H1 (cell line): ENCODE measurements at regions of chr6 and their contacts with region 1.

Region 1: DNA sequence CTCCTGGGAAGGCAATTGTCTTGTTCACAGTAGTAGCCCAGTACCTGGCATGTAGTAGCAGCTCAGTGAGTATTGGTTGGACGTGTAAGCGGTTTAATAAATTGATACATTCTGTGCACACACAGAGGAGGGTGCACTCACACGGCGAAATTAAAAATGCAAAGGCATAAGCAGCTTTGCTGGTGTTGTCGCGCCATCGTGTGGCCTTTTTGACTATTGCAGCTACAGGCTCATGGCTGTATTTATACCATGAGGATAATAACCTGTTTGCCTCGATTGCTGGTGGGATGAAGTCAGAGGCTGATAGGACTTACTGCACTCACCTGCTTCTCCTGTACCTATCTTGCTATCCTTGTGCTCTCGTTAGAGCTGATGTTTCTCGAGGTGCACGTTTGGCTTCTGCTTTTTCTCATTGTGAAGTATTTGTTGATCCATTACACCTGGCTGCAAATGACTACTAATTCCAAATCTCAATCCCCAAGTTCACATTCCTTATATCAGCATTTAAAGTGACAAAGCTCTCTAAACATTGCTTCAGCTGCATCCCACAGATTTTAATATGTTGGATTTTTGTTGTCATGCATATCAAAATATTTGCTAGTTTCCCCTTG is 61.5 kb downstream of the TBXT start:
- DNase-seq: peak in 1 of 2 experiments; percentile 92
- H3K4me3 ChIP-seq: no peak overlapping the region
- H3K27ac ChIP-seq: no peak overlapping the region
- H3K4me1 ChIP-seq: no peaks in the 10 kb centered on the region
- H3K27me3 ChIP-seq: no peaks in the 10 kb centered on the region; a peak in 1 of 7 replicates
- CTCF ChIP-seq: peak; percentile 70 to 96 (median 92)
- EP300 ChIP-seq: no peak
- POLR2A ChIP-seq: no peak
- RAD21 ChIP-seq: peak; percentile 99 to 100

Region 2: DNA sequence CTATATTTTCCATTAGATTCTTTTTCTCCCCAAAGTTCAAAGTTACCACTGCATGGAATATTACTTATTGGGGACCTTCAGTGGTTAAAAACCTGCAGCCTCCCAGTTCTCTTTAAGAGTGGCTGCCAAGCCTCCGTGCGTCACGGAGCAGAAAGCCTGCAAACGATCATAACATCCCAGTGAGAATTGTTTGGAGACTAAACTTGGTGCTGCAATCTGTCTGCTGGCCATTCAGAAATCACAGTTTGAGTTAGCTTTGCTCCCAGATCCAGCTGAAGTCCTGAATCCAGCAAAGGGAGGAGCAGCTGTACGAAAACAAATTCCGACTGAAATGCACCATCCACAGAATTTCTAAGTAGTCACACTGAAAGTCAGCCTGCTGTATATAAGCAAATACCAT is 229.6 kb before region 1 on chr6:
- CTCF ChIA-PET with region 1: interaction called, 74 read pairs
- POLR2A ChIA-PET with region 1: no interaction called
- DNase-seq: no peak
- H3K4me3 ChIP-seq: no peak overlapping the region
- H3K27ac ChIP-seq: no peak overlapping the region
- H3K4me1 ChIP-seq: no peaks in the 10 kb centered on the region
- H3K27me3 ChIP-seq: no peaks in the 10 kb centered on the region; a peak in 1 of 7 replicates
- CTCF ChIP-seq: no peak
- EP300 ChIP-seq: no peak
- POLR2A ChIP-seq: no peak
- RAD21 ChIP-seq: no peak

Region 3: GRCh38 chr6:165884813-165885765 is 221.1 kb before region 1 on chr6:
- CTCF ChIA-PET with region 1: interaction called, 111 read pairs
- POLR2A ChIA-PET with region 1: no interaction called
- DNase-seq: peak; percentile 47 to 94
- H3K4me3 ChIP-seq: no peak overlapping the region
- H3K27ac ChIP-seq: no peak overlapping the region
- H3K4me1 ChIP-seq: no peaks in the 10 kb centered on the region
- H3K27me3 ChIP-seq: peaks cover 0 to 2% (median 0%) of the 10 kb centered on the region in 4 experiments; a peak in 1 of 7 replicates
- CTCF ChIP-seq: peak; percentile 87 to 97 (median 87)
- EP300 ChIP-seq: no peak
- POLR2A ChIP-seq: no peak
- RAD21 ChIP-seq: peak; percentile 95 to 96

Region 4: DNA sequence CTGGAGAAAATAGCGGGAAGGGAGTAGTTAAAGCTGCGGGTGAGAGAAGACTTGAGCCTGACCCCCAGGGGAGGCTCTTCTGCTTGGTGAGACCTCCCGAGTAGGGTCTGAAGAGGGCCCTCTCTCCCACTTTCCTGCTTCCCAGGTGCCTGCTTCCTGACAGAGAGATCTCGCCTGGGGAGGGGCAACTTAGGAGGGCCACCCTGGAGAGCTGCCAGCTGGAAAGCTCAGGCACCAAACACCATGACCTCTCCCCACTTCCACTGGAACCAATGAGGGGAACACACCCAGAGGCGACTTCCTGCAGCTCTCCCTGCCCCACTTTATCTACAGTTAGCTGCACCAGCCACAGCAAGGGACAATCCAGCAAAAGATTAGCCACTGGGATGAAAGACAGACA is 146.6 kb before region 1 on chr6:
- CTCF ChIA-PET with region 1: interaction called, 10 read pairs
- POLR2A ChIA-PET with region 1: no interaction called
- DNase-seq: no peak
- H3K4me3 ChIP-seq: no peak overlapping the region
- H3K27ac ChIP-seq: no peak overlapping the region
- H3K4me1 ChIP-seq: no peaks in the 10 kb centered on the region
- H3K27me3 ChIP-seq: no peaks in the 10 kb centered on the region; a peak in 2 of 7 replicates
- CTCF ChIP-seq: no peak
- EP300 ChIP-seq: no peak
- POLR2A ChIP-seq: no peak
- RAD21 ChIP-seq: no peak

Region 5: DNA sequence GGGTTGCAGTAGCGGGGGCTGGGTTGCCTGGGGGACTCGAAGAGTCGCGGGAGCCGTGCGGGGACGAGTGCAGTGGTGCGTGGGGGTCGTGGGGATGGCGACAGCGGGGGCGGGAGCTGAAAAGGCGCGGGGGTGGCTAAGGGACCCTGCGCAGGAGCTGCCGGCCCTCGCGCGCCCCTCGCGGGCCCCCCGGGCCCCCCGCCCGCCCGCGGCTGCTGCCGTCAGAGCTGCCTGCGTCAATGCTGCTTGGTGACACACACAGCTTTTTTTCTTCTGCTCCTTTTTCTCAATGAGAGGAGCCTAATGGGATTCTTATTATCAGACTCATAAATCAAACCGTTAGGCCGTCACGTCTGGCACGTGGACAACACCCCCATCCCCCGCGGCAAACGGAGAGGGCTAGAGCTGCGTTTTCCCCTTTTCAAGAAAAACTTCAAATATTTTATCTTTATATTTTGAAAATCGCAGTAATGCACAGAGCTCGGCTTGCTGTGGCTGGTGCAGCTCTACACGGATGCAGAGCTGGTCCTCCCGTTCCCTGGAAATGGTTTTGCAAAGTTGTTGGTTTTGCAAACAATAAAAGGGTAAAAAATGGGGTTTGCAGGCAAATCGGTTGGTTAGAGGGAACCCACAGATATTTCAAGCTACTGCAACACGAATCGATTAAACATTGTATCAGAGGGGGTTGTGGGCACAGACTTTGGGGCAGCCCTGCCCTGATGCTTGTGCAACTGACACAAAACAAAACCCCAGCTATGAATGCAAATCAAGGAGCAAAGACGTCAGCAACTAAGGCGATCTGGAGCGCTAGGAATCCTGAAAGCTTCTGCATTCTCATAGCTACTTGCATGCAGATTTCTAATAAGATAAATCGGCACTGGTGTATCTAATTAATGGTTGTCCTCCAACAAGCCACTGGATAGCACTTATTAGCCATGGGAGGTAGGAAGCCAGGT is 100.0 kb before region 1 on chr6:
- CTCF ChIA-PET with region 1: interaction called, 11 read pairs
- POLR2A ChIA-PET with region 1: no interaction called
- DNase-seq: peak in 1 of 2 experiments; percentile 43
- H3K4me3 ChIP-seq: peak overlapping the region; percentile 14 to 55 (median 27); a peak in 7 of 8 replicates
- H3K27ac ChIP-seq: no peak overlapping the region
- H3K4me1 ChIP-seq: peaks cover 3 to 16% (median 11%) of the 10 kb centered on the region in 4 experiments
- H3K27me3 ChIP-seq: peaks cover 44 to 77% (median 67%) of the 10 kb centered on the region in 4 experiments
- CTCF ChIP-seq: no peak
- EP300 ChIP-seq: no peak
- POLR2A ChIP-seq: no peak
- RAD21 ChIP-seq: no peak

Region 6: GRCh38 chr6:166087246-166087645 is 18.9 kb before region 1 on chr6:
- CTCF ChIA-PET with region 1: interaction called, 21 read pairs
- POLR2A ChIA-PET with region 1: no interaction called
- DNase-seq: no peak
- H3K4me3 ChIP-seq: no peak overlapping the region
- H3K27ac ChIP-seq: no peak overlapping the region
- H3K4me1 ChIP-seq: no peaks in the 10 kb centered on the region
- H3K27me3 ChIP-seq: peaks cover 0 to 4% (median 0%) of the 10 kb centered on the region in 4 experiments; a peak in 1 of 7 replicates
- CTCF ChIP-seq: no peak
- EP300 ChIP-seq: no peak
- POLR2A ChIP-seq: no peak
- RAD21 ChIP-seq: no peak

Region 7: DNA sequence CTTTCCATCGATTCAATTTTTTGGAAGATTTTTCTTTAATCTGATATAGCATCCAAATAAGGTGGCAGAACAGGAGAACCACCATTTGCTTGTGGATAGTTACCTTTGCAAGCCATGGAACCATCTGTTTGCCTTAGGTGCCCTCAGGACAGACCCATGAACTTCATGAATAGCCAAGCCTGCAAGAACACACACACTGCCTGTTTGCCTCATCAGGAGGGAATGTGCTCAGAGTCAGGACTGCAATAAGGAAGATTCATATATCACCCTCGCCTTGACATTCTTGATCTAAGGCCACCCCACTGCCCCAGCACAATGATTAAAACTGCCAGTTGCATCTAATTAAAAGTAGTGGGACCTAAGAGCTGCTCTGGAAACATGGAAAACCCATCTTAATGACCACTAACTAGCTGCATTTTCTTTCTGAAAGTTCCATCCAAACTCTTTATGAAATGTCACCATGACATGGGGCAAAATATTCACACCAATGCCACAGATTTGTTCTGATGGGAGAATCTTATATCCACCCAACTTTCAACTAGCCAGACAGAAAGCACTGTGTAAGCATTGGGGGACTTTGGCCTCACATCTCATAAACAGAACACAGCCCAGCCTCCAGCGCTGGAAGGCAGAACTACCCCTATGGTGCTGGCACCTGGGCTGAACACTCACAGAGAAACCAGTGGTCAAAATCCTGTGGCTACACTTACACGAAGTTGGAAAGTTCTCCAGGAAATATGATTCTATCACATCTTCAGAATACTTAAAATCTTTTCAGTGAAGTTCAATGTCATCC is 13.1 kb after region 1 on chr6:
- CTCF ChIA-PET with region 1: interaction called, 16 read pairs
- POLR2A ChIA-PET with region 1: no interaction called
- DNase-seq: no peak
- H3K4me3 ChIP-seq: no peak overlapping the region
- H3K27ac ChIP-seq: no peak overlapping the region
- H3K4me1 ChIP-seq: no peaks in the 10 kb centered on the region
- H3K27me3 ChIP-seq: no peaks in the 10 kb centered on the region
- CTCF ChIP-seq: no peak
- EP300 ChIP-seq: no peak
- POLR2A ChIP-seq: no peak
- RAD21 ChIP-seq: no peak